ENCODE measurements at regions of chr1 and their contacts with region 1.

Region 1: DNA sequence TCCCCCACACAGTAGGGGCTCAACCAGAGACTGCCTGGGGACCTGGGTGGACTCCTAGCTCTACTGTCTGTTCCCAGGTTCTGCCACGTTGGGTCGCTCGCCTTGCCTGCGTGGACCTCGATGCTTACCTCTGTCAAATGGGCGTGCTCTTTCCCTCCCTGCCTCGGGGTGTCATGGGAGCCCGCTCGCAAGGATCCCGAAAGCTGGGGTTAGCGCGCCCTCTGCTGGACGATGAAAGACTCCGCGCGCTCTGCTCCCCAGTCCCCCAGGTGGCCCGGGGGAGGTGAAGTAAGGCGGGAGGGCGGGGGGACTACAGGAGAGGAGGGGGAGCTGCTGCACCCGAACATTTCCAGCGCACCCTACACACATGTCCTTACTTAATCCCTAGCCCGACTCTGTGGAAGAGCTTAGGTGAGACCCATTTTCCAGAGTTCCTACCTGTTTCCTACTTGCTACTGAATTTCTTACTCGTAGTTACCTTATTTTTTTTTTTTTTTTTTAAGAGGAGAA is 2.3 kb upstream of the BSND start:
- DNase-seq: peak; percentile 93
- H3K4me3 Mint-ChIP-seq: peak overlapping the region; percentile 43
- H3K27ac Mint-ChIP-seq: no peak overlapping the region
- H3K4me1 Mint-ChIP-seq: peaks cover 21% of the 10 kb centered on the region
- H3K27me3 Mint-ChIP-seq: peaks cover 28% of the 10 kb centered on the region

Region 2: GRCh38 chr1:54944610-54945544 is 51.5 kb before region 1 on chr1:
- intact Hi-C with region 1: loop called (anchors 1 kb)
- DNase-seq: peak; percentile 89
- H3K4me3 Mint-ChIP-seq: no peak overlapping the region
- H3K27ac Mint-ChIP-seq: no peak overlapping the region
- H3K4me1 Mint-ChIP-seq: peaks cover 17% of the 10 kb centered on the region
- H3K27me3 Mint-ChIP-seq: peaks cover 14% of the 10 kb centered on the region

Region 3: DNA sequence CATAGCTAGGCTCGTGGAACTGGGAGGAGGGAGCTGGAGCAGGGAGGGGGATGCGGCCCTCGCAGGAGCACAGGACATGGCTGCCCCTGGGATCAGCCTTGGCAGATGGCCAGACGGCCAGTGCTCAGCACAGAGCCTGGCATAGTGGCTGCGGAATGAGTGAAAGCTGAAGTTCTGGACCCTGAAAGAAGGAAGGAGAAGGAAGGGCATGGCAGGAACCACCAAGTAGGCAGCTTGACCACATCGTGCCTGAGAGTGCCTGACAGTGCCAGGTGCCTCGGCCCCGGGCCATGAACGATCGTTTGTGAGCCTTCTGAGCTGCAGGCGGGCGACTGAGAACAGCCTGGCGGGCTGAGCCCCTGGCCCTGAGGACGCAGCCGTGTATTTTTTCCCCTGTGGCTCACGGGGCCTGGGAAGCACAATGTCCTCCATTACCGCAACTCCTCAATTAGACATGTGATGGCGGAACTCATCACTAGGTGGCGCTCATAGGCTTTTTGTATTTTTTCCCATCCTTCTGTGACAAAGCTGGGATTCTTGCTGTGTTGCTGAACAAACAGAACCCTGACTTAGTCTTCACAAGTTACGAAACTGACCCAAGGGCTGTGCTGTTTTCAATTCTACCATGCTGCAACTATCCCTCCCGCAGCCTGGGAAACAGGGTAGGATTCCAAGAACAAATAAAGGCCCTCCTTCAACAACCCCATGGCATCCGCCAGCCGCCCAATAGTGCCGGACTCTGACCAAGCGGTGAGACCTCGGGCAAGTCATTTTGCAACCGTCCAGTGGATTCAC is 45.8 kb before region 1 on chr1:
- intact Hi-C with region 1: loop called (anchors 1 kb)
- DNase-seq: peak; percentile 88
- H3K4me3 Mint-ChIP-seq: no peak overlapping the region
- H3K27ac Mint-ChIP-seq: no peak overlapping the region
- H3K4me1 Mint-ChIP-seq: peaks cover 13% of the 10 kb centered on the region
- H3K27me3 Mint-ChIP-seq: peaks cover 3% of the 10 kb centered on the region

Region 4: DNA sequence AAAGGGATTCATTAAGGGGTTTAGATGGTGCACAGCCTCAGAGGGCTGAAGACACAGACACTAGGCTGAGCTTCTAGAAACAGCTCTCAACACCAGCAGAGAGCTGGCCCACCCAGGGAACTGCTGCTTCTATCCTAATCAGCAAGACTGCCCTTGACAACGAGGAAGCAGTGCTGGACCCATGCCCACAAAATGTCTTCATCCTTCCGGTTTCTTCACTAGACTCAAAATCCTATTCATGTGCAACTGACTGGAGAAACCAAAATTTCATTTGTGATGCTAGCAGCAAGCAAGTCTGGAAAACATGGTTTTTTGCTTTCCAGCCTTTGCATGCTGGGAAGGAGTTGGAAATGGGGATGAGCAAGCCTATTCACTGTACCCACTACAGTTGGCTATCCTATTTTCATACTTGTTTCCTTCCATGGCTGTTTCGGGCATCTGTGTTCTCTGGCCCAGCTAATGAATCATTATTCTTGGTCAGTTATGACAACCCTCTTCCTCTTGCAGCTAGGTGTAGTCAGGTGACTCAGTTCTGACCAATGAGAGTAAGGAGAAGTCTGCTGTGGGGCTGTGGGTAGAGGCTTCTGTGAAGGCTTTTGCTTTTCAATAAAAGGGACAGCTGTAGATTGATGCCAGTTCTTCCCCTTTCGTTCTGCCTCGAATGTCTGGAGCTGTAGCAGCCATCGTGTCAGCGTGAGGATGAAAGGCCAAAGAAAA is 30.6 kb before region 1 on chr1:
- intact Hi-C with region 1: no loop called
- DNase-seq: no peak
- H3K4me3 Mint-ChIP-seq: no peak overlapping the region
- H3K27ac Mint-ChIP-seq: no peak overlapping the region
- H3K4me1 Mint-ChIP-seq: peaks cover 4% of the 10 kb centered on the region
- H3K27me3 Mint-ChIP-seq: peaks cover 17% of the 10 kb centered on the region